ENCODE measurements at regions of chr2 and their contacts with region 1.

Region 1: DNA sequence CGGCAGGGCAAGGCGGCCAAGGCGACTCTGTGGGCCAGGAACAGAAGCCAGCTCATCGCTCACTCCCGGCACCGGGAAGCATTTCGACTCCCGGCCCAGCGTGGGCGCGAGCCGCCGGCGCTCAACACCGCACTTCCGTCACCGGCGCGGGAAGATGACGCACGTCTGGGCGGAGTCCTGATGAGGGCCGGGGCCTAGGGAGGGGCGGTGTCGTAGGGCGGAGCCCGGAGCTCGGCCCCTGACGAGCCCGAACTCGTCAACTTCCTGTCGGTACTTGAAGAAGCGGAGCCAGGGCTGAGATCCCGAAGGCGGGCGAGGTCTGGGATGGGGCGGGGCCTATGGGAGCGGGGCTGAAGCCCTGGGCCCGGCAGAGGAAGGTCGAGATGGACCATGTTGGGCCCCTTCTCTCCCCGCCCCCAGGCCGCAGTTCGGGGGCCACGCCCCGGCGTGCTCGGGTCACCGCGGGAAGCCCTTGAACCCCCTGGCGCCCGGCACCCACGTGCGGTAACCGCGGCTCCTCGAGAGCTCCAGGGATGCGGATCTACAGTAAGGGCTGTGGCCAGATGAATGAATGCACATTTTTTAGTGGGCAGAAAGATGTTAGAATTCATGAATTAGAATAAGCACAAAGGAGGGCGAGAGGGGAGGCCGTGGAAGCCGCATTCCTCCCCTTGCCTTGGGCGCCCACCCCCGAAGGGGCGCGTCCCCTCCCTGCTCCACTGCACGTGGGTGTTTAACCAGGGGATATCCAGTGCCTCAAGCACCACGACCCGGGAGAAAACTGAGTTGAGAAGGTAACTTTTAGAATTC is at the start of gene RNASEH1:
- DNase-seq: peak; percentile 99
- ATAC-seq: peak; percentile 98
- H3K4me3 ChIP-seq: peak within 1 kb of the TSS; percentile 85 to 92 (median 89)
- H3K27ac ChIP-seq: peak within 1 kb of the TSS; percentile 93
- H3K4me1 ChIP-seq: peaks cover 25% of the 10 kb centered on the region
- H3K27me3 ChIP-seq: no peaks in the 10 kb centered on the region; a peak in 1 of 5 replicates
- CTCF ChIP-seq: no peak; the same call in none of the 2 replicates
- EP300 ChIP-seq: peak in 1 of 2 experiments; percentile 39; a peak in 2 of 4 replicates
- POLR2A ChIP-seq: peak; percentile 88 to 96
- RAD21 ChIP-seq: peak; percentile 47; the same call in 1 of the 2 replicates
- total RNA-seq, gene RNASEH1: 57.2 and 57.4 TPM in 2 replicates

Region 2: DNA sequence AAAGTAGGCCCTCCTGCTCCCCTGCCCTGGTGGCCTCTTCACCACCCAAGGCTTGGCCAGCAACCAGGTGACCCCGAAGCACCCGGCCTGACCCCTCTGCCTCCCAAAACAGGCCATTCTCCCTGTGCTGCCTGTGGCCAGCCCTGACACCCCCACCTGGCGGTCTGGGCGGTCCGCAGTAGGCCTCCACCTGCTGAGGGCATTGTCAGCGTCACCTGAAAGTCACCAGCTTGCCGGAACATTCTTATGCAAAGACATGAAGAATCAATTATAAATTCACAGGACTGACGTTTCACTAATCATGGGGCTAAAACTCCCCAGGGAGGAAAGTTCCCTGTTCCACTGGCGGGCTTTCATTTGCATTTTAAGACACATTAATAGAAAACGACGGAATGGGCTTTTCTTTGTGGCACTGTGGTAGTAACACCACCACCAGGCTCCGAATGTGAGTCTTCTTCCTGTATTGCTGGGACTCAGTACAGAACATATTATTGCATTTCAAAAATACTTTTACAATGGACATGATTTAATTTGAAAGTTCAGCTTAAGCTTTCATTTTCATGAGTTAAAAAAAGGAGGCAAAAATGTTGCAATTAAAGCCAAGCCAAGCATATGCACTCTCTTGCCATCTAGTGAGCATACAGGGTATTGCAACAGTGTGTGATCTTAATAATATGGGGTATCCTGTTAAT is 96.5 kb before region 1 on chr2:
- CTCF ChIA-PET with region 1: no interaction called
- POLR2A ChIA-PET with region 1: interaction called, 19 read pairs
- in situ Hi-C with region 1: no loop called
- intact Hi-C with region 1: no loop called
- DNase-seq: peak; percentile 69
- ATAC-seq: no peak
- H3K4me3 ChIP-seq: no peak overlapping the region
- H3K27ac ChIP-seq: no peak overlapping the region
- H3K4me1 ChIP-seq: peaks cover 39% of the 10 kb centered on the region
- H3K27me3 ChIP-seq: no peaks in the 10 kb centered on the region
- CTCF ChIP-seq: peak; percentile 71
- EP300 ChIP-seq: no peak
- POLR2A ChIP-seq: no peak
- RAD21 ChIP-seq: 0 out of 2 replicates have a peak, but pooled peaks have one; percentile 54

Region 3: DNA sequence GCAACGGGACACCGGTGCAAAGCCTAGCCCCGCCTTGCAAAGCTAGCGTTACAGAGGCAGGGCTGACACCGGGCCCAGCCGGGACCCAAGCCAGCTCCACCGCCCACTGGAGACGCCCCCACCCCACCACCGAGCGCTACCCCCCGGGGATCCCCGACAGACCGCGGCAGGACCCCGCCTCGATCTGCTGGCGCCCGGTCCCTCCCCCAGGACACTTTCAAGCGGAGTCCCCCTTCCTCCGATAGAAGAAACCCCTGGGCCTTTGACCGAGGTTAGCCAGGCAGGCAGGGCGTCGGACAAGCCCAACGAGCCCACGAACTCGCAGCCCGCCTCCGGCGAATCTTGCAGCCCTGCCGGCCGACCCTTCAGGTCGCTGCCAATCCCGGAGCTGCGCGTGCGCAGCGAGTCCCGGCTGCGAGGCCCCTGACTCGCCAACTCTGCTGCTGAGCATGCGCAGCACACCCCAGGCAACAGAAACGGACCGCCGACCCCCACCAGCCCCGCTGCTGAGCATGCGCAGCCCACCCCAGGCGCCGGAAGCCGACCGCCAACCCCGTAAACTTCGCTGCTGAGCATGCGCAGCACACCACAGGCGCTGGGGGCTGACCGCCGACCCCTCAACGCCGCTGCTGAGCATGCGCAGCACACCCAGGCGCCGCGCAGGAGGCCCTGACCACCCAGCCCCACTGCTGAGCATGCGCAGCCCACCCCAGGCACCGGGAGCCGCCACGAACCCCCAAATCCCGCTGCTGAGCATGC is 39.7 kb before region 1 on chr2:
- CTCF ChIA-PET with region 1: no interaction called
- POLR2A ChIA-PET with region 1: interaction called, 38 read pairs
- in situ Hi-C with region 1: no loop called
- intact Hi-C with region 1: loop called (anchors 1 kb)
- DNase-seq: peak; percentile 97
- ATAC-seq: peak; percentile 70
- H3K4me3 ChIP-seq: peak overlapping the region; percentile 67 to 88 (median 81)
- H3K27ac ChIP-seq: peak overlapping the region; percentile 96
- H3K4me1 ChIP-seq: peaks cover 74% of the 10 kb centered on the region
- H3K27me3 ChIP-seq: no peaks in the 10 kb centered on the region
- CTCF ChIP-seq: peak; percentile 17; the same call in 1 of the 2 replicates
- EP300 ChIP-seq: no peak
- POLR2A ChIP-seq: peak in 1 of 2 experiments; percentile 91; a peak in 2 of 4 replicates
- RAD21 ChIP-seq: peak; percentile 40

Region 4: DNA sequence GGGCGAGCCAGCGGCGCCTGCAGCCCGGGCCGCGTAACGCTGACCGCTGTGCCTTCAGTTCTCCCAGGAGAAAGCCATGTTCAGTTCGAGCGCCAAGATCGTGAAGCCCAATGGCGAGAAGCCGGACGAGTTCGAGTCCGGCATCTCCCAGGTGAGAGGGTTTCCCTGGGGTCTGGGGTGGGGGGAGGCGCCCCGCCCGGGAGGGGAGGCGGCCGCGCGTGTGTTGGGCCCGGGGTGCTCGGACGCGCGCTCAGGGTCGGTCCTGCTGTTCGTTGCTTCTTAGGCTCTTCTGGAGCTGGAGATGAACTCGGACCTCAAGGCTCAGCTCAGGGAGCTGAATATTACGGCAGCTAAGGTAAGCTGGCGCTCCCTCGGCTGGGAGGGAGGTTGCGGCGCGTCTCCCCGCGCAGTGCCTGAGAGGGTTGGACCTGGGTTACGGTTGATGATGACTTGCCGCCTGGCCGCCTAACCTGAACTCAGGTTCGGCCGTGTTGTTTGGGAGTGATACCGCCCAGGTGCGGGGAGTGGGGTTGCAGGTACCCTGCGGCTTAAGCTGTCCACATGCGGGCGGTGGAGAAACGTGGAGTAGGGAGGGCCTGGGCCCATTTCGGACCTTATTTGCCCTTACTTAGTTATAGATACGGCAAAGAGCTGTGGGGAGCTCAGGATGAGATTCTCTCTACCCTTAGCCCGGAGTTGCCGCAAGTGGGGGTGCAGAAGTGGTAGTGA is 17.3 kb after region 1 on chr2:
- CTCF ChIA-PET with region 1: no interaction called
- POLR2A ChIA-PET with region 1: interaction called, 71 read pairs
- in situ Hi-C with region 1: no loop called
- intact Hi-C with region 1: loop called (anchors 1 kb)
- DNase-seq: no peak
- ATAC-seq: peak; percentile 63
- H3K4me3 ChIP-seq: peak overlapping the region; percentile 89 to 100 (median 91)
- H3K27ac ChIP-seq: peak overlapping the region; percentile 84
- H3K4me1 ChIP-seq: peaks cover 63% of the 10 kb centered on the region
- H3K27me3 ChIP-seq: no peaks in the 10 kb centered on the region; a peak in 1 of 5 replicates
- CTCF ChIP-seq: no peak; the same call in 1 of the 2 replicates
- EP300 ChIP-seq: no peak
- POLR2A ChIP-seq: no peak
- RAD21 ChIP-seq: no peak

Region 5: GRCh38 chr2:3604991-3605961 is 46.9 kb after region 1 on chr2:
- CTCF ChIA-PET with region 1: no interaction called
- POLR2A ChIA-PET with region 1: interaction called, 14 read pairs
- in situ Hi-C with region 1: no loop called
- intact Hi-C with region 1: no loop called
- DNase-seq: peak; percentile 83
- ATAC-seq: peak; percentile 72
- H3K4me3 ChIP-seq: peak overlapping the region; percentile 47 to 65 (median 56)
- H3K27ac ChIP-seq: peak overlapping the region; percentile 83
- H3K4me1 ChIP-seq: peaks cover 72% of the 10 kb centered on the region
- H3K27me3 ChIP-seq: no peaks in the 10 kb centered on the region
- CTCF ChIP-seq: no peak
- EP300 ChIP-seq: peak; percentile 15 to 41; a peak in 3 of 4 replicates
- POLR2A ChIP-seq: peak; percentile 69 to 77
- RAD21 ChIP-seq: peak; percentile 21; the same call in 1 of the 2 replicates

Region 6: DNA sequence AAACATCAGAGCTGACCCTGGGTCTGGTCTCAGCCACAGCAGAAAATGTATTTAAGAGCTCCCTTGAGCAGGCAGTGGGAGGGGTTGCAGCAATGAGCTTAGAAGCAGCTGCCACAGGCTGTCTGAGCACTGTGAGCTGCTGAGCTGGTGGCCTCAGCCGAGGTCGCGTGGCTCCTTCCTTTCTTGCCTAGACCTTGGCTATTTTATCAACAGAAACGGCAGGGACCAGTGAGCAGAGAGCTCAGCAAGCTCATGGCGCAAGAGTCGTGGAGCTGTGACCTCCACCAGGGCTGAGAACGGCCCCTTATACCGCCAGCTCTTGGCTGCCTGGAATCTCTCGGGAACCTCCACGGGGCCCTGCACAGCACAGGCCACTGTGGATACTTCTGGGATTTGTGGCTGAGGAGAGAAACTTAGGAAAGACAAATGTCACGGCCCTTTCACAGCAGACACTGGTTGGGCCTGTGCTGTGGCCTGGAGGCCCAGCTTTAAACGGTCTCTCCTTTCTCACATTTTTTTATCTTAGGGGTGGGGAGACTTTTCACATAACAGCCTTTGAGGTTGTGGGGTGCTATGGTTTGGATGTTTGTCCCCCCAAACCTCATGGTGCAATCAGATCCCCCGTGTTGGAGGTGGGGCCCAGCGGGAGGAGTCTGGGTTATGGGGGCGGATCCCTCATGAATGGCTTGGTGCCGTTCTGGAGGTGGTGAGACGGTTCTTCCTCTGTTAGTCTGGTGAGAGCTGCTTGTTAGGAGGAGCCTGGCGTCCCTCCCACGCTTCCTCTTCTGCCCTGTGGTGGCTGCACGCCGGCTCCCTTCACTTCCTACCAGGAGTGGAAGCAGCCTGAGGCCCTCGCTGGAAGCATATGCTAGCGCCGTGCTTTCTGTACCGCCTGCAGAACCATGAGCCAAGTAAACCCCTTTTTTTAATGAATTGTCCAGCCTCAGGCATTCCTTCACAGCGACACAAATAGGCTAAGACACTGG is 101.3 kb after region 1 on chr2:
- CTCF ChIA-PET with region 1: no interaction called
- POLR2A ChIA-PET with region 1: interaction called, 11 read pairs
- in situ Hi-C with region 1: no loop called
- intact Hi-C with region 1: loop called (anchors 5 kb)
- DNase-seq: peak; percentile 47
- ATAC-seq: peak; percentile 56
- H3K4me3 ChIP-seq: peak overlapping the region; percentile 33 to 56 (median 41); a peak in 5 of 6 replicates
- H3K27ac ChIP-seq: peak overlapping the region; percentile 15
- H3K4me1 ChIP-seq: peaks cover 66% of the 10 kb centered on the region
- H3K27me3 ChIP-seq: peaks cover 0 to 10% of the 10 kb centered on the region in 2 experiments; a peak in 2 of 5 replicates
- CTCF ChIP-seq: no peak
- EP300 ChIP-seq: no peak
- POLR2A ChIP-seq: 0 out of 4 replicates have a peak, but pooled peaks of 1 of the 2 experiments have one; percentile 18
- RAD21 ChIP-seq: no peak

Region 7: DNA sequence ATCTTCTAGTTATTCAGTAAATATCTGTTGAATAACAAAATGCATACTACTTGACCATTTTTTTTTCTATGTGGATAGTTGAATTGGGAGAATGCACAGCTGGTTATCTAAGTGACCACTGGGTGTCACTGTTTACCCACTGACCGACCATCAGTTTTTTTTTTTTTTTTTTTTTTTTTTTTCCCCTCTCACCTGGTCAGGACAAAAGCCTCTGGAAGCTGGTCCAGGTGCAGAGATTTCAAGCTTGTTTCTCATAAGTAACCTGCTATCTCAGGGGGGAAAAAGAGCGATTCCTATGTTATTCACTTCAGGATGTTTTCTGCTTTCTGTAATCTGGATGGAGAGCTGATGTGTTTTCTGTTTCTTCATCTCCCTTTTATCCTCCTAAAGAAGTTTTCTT is 401.0 kb after region 1 on chr2:
- CTCF ChIA-PET with region 1: no interaction called
- POLR2A ChIA-PET with region 1: no interaction called
- in situ Hi-C with region 1: no loop called
- intact Hi-C with region 1: no loop called
- DNase-seq: peak; percentile 31
- ATAC-seq: peak; percentile 74
- H3K4me3 ChIP-seq: no peak overlapping the region
- H3K27ac ChIP-seq: no peak overlapping the region
- H3K4me1 ChIP-seq: no peaks in the 10 kb centered on the region
- H3K27me3 ChIP-seq: peaks cover 3 to 17% of the 10 kb centered on the region in 2 experiments; a peak in 4 of 5 replicates
- CTCF ChIP-seq: peak; percentile 76
- EP300 ChIP-seq: no peak
- POLR2A ChIP-seq: no peak
- RAD21 ChIP-seq: peak; percentile 53